Left ventricle myocardium superior (tissue), 1 donor: ENCODE measurements at regions of chr14 and their contacts with region 1.

Region 1: GRCh38 chr14:60622917-60623257 is 26.4 kb downstream of the SIX1 start:
- DNase-seq: no peak
- ATAC-seq: no peak

Region 2: GRCh38 chr14:60266021-60266937 is 356.6 kb before region 1 on chr14:
- intact Hi-C with region 1: no loop called
- DNase-seq: no peak
- ATAC-seq: no peak

Region 3: GRCh38 chr14:61252369-61253063 is 629.6 kb after region 1 on chr14:
- intact Hi-C with region 1: loop called (anchors 2 kb)
- DNase-seq: peak; percentile 48
- ATAC-seq: peak; percentile 96